ENCODE measurements at regions of chr14 and their contacts with region 1.

Region 1: DNA sequence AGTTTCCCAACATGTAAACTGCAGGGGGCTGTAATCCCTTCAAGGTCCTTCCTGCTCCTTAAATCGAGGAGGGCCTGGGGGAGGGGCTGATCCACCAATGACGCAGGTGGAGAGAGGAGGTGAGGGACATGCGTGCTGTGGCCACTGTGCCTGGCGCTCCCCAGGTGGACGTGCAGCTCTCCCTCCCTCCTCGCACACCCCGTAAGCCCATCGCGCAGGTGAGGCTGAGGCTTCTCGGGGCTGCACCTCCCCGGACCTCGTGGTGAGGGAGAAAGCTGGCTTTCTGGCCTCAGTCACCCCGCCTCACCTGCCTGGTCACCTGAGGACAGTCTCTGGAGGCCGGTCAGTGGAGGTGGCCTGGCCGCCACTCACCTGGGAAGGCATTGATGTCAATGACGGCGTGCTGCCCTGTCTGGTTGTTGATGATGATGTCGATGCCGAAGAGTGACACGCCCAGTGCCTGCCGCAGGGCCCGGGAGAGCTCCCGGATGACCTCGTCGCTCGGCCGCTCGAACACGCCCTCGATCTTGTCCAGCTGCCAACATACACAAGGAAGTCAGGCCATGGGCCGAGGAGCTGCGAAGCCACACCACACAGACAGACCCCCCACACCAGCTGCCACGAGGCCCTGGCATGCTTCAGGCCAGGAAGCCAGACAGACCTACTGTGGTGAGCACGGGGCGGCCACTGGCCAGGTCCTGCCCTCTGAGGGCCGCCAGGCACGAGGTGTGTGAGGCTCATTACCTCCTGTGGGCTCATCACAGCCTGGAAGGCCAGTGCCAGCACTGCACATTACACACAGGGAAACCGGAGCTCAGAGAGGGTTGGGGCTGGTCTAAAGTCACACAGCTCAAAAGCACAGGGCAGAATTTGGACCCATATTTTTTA is 23.3 kb downstream of the CHGA start:
- DNase-seq: peak; percentile 12
- H3K4me3 ChIP-seq: no peak overlapping the region
- H3K27ac ChIP-seq: peak overlapping the region in 1 of 4 donors; percentile 39
- H3K4me1 ChIP-seq: peaks cover 4 to 13% (median 5%) of the 10 kb centered on the region in 3 donors
- H3K27me3 ChIP-seq: no peaks in the 10 kb centered on the region
- CTCF ChIP-seq: no peak
- POLR2A ChIP-seq: no peak

Region 2: GRCh38 chr14:93142854-93143652 is 196.8 kb after region 1 on chr14:
- intact Hi-C with region 1: loop called (anchors 5 kb)
- DNase-seq: no peak
- H3K4me3 ChIP-seq: no peak overlapping the region
- H3K27ac ChIP-seq: no peak overlapping the region
- H3K4me1 ChIP-seq: peaks cover 0 to 2% (median 0%) of the 10 kb centered on the region in 3 donors
- H3K27me3 ChIP-seq: no peaks in the 10 kb centered on the region
- CTCF ChIP-seq: no peak
- POLR2A ChIP-seq: no peak